Mammary epithelial cell (primary cell): ENCODE measurements at regions of chr7 and their contacts with region 1.

Region 1: DNA sequence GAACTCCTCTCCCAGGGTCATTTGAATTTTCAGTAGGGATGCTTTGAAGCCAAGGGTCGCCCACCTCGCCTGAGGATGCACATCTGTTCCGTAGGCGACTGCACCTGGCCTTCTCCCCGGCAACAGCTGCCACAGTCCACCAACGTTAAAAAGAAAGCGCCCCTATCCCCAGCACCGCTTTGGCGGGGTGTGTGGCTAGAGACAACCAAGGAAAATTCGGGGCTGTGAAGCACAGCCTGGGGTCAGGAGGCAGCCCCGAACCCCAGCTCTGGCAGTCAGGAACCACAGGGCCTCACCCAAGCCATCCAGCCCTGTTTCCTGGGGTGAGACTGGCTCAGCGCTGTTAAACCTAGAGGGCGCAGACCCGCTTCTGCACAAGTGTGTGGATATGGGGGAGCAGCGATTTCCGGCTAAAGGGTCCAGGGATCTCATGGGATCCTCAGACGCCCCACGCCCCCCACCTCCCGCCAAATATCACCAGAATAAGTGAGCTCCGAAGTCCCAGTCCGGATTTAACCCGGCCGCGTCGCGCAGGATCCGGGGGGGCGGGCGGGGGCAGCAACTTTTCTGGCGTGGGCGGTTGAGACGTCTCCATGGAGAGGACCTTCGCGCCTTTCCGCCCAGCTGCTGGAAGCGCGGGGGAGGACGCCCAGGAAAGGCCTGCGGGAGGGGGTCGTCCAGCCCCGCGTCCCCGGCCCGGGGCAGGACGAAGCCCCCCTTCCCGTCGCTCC is 822 bp downstream of the ZC3HAV1L start:
- DNase-seq: peak; percentile 25
- H3K4me3 ChIP-seq: peak overlapping the region; percentile 55 to 81 (median 67)
- H3K27ac ChIP-seq: peak overlapping the region; percentile 50
- H3K4me1 ChIP-seq: peaks cover 18% of the 10 kb centered on the region
- H3K27me3 ChIP-seq: no peaks in the 10 kb centered on the region
- CTCF ChIP-seq: no peak

Region 2: DNA sequence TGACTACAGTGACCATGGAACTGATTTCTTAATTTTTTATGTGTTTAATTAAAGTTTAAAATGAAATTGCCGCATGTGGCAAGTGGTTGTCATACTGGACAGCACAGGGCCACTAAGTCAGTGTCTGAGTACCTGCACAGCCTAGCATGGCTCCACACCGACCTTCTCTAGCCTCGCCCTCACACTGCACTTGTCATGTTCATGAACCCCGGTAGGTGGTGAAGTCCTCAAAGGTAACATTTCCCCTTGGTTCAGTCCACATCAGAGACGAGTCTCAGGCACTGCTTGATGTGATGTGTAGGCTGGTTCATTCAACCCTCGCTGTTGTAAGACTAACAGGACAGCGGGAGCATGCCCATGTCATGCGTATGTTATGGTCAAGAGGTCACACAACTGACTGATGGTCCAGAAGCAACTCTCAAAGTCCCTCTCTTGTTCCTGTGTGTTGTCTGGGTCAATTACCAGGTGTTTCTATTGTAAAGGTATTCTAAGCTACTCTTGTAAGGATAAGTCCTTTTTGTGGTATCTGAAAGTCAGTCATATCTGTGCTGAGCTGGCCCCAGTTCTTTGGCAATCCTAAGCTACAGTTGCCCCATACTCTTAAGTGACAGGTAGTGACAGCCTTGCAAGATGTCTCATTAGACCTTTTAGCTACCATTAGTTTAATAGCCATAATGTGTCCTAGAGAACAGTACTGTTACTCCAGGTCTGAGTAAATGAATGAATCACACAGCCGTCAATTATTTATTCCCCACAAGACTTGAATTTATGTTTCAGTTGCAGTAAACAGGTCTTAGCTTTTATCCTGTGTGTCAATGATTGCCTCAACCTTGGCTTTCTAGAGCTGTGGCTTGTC is 33.8 kb after region 1 on chr7:
- CTCF ChIA-PET with region 1: no interaction called
- dilution Hi-C with region 1: loop called (anchors 5 kb)
- in situ Hi-C with region 1: no loop called
- intact Hi-C with region 1: no loop called
- DNase-seq: no peak
- H3K4me3 ChIP-seq: no peak overlapping the region
- H3K27ac ChIP-seq: no peak overlapping the region
- H3K4me1 ChIP-seq: no peaks in the 10 kb centered on the region
- H3K27me3 ChIP-seq: no peaks in the 10 kb centered on the region
- CTCF ChIP-seq: no peak